Gastrocnemius medialis (tissue), 4 donors: ENCODE measurements at regions of chr19 and their contacts with region 1.

Region 1: DNA sequence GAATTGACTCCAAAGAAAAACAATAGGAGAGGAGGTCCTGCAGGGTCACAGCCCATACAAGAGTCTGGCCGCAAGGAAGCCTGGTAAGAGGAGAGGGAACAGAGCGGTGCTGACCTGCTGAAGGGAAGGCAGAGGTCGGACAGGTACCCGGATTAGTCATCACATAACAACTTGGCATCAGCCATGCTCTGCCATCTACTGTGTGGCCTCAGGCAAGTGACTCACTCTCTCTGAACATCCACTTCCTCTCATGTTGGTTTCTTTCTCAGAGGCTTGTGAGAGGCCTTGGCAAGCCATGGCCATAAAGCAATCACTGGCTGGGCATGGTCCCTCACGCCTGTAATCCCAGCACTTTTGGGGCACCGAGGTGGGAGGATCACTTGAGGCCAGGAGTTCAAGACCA is 7.4 kb upstream of the CAPNS1 start:
- DNase-seq: no peak
- ATAC-seq: no peak
- H3K4me3 ChIP-seq: no peak overlapping the region
- H3K27ac ChIP-seq: no peak overlapping the region
- H3K4me1 ChIP-seq: peaks cover 16 to 20% of the 10 kb centered on the region in 2 donors
- H3K27me3 ChIP-seq: no peaks in the 10 kb centered on the region
- CTCF ChIP-seq: no peak
- POLR2A ChIP-seq: no peak

Region 2: GRCh38 chr19:36169084-36169760 is 36.7 kb after region 1 on chr19:
- in situ Hi-C with region 1: loop called (anchors 5 kb)
- intact Hi-C with region 1: loop called (anchors 1 kb)
- DNase-seq: peak in 1 of 2 donors; percentile 34
- ATAC-seq: peak; percentile 29 to 41
- H3K4me3 ChIP-seq: no peak overlapping the region
- H3K27ac ChIP-seq: peak overlapping the region; percentile 57 to 84 (median 72)
- H3K4me1 ChIP-seq: peaks cover 10 to 13% of the 10 kb centered on the region in 2 donors
- H3K27me3 ChIP-seq: no peaks in the 10 kb centered on the region
- CTCF ChIP-seq: no peak
- POLR2A ChIP-seq: no peak

Region 3: DNA sequence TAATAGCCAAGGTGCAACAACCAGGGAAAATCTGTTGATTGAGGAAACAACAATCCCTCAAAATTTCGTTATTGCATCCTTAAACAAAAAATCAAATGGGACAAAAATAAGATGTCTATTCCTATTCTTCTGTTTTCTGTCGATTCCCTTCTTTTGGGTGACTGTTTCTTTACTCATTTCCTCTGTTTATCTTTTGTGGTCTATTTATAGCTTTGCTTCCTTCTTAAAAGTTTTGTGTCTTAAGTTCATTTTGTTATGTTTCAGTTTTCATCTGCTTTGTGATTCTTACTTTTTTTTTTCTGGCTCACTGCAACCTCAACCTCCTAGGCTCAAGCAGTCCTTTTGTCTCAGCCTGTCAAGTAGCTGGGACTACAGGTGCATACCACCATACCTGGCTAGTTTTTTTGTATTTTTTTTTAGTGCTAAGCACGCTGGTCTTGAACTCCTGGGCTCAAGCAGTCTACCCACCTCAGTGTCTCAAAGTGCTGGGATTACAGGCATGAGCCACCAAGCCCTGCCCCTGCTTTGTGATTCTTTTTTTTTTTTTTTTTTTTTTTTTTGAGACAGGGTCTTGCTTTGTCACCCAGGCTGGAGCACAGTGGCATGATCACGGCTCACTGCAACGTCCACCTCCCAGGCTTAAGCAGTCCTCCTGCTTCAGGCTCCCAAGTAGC is 92.9 kb after region 1 on chr19:
- in situ Hi-C with region 1: no loop called
- intact Hi-C with region 1: no loop called
- DNase-seq: no peak
- ATAC-seq: no peak
- H3K4me3 ChIP-seq: no peak overlapping the region
- H3K27ac ChIP-seq: no peak overlapping the region
- H3K4me1 ChIP-seq: peaks cover 5 to 13% of the 10 kb centered on the region in 2 donors
- H3K27me3 ChIP-seq: no peaks in the 10 kb centered on the region
- CTCF ChIP-seq: no peak
- POLR2A ChIP-seq: no peak